Activated CD8-positive, alpha-beta T cell treated with anti-CD3 and anti-CD28 coated beads for 36 hours (primary cell): ENCODE measurements at regions of chr15 and their contacts with region 1.

Region 1: DNA sequence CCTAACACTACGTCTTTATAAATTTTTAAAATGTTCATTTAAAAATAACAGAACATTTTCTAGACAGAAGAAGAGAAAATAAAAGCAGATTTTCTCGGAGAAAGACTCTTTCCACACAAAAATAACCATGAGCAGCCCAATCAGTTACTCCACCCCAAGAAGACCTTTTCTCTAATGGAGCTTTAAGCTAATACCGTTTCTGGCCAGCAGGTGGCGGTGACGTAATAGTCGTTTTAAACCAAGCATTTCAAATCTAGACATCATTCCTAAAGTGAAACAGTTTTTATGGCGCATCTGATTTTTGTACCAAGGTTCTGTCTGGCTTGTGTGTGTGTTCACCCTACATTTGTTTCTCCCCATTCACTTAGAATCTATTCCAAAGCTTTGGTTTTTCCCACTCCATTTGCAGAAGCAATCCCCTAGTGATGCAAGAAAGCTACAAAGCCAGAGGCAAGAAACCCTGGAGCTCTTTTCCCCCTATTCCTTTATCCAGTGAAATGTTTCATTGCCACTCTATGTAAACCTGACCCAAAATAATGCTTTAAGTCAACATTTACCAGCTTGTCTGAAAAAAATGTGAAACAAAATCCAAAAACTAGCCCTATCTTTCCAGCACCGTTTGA is 336.7 kb upstream of the IGF1R start:
- DNase-seq: peak; percentile 90
- ATAC-seq: peak; percentile 55
- H3K4me3 Mint-ChIP-seq: no peak overlapping the region
- H3K27ac Mint-ChIP-seq: no peak overlapping the region
- H3K4me1 Mint-ChIP-seq: no peaks in the 10 kb centered on the region
- H3K27me3 Mint-ChIP-seq: peaks cover 13% of the 10 kb centered on the region
- CTCF ChIP-seq: peak; percentile 69

Region 2: GRCh38 chr15:98202256-98202655 is 109.4 kb before region 1 on chr15:
- CTCF ChIA-PET with region 1: no interaction called
- POLR2A ChIA-PET with region 1: no interaction called
- intact Hi-C with region 1: no loop called
- DNase-seq: no peak
- ATAC-seq: no peak
- H3K4me3 Mint-ChIP-seq: no peak overlapping the region
- H3K27ac Mint-ChIP-seq: no peak overlapping the region
- H3K4me1 Mint-ChIP-seq: no peaks in the 10 kb centered on the region
- H3K27me3 Mint-ChIP-seq: no peaks in the 10 kb centered on the region
- CTCF ChIP-seq: no peak

Region 3: GRCh38 chr15:98326810-98327209 is 15.1 kb after region 1 on chr15:
- CTCF ChIA-PET with region 1: interaction called, 11 read pairs
- POLR2A ChIA-PET with region 1: interaction called, 3 read pairs
- intact Hi-C with region 1: no loop called
- DNase-seq: no peak
- ATAC-seq: no peak
- H3K4me3 Mint-ChIP-seq: no peak overlapping the region
- H3K27ac Mint-ChIP-seq: no peak overlapping the region
- H3K4me1 Mint-ChIP-seq: no peaks in the 10 kb centered on the region
- H3K27me3 Mint-ChIP-seq: peaks cover 5% of the 10 kb centered on the region
- CTCF ChIP-seq: no peak

Region 4: DNA sequence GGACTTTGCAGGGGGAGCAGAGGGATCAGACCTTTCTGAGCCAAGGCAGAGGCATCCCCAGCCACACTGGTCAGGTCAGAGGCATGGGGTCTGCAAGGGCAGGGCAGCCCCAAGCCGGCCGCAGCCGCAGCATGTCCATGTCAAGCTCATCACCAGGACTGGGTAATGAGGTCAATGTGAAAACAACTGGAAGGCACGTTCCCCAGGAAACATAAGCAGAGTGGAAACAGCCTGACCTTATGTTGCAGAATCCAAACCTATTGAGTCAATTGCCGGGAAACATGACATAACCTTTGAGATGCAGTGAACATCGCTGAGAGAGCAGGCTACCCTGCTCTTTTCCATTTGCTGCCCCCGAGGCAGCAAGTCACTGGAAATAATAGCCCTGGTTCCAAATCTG is 21.6 kb after region 1 on chr15:
- CTCF ChIA-PET with region 1: interaction called, 11 read pairs
- POLR2A ChIA-PET with region 1: no interaction called
- intact Hi-C with region 1: no loop called
- DNase-seq: no peak
- ATAC-seq: no peak
- H3K4me3 Mint-ChIP-seq: no peak overlapping the region
- H3K27ac Mint-ChIP-seq: no peak overlapping the region
- H3K4me1 Mint-ChIP-seq: no peaks in the 10 kb centered on the region
- H3K27me3 Mint-ChIP-seq: no peaks in the 10 kb centered on the region
- CTCF ChIP-seq: no peak

Region 5: GRCh38 chr15:98421419-98422129 is 109.9 kb after region 1 on chr15:
- CTCF ChIA-PET with region 1: interaction called, 49 read pairs
- POLR2A ChIA-PET with region 1: no interaction called
- intact Hi-C with region 1: loop called (anchors 2 kb)
- DNase-seq: peak; percentile 68
- ATAC-seq: peak; percentile 79
- H3K4me3 Mint-ChIP-seq: no peak overlapping the region
- H3K27ac Mint-ChIP-seq: no peak overlapping the region
- H3K4me1 Mint-ChIP-seq: peaks cover 3% of the 10 kb centered on the region
- H3K27me3 Mint-ChIP-seq: peaks cover 26% of the 10 kb centered on the region
- CTCF ChIP-seq: peak; percentile 100

Region 6: DNA sequence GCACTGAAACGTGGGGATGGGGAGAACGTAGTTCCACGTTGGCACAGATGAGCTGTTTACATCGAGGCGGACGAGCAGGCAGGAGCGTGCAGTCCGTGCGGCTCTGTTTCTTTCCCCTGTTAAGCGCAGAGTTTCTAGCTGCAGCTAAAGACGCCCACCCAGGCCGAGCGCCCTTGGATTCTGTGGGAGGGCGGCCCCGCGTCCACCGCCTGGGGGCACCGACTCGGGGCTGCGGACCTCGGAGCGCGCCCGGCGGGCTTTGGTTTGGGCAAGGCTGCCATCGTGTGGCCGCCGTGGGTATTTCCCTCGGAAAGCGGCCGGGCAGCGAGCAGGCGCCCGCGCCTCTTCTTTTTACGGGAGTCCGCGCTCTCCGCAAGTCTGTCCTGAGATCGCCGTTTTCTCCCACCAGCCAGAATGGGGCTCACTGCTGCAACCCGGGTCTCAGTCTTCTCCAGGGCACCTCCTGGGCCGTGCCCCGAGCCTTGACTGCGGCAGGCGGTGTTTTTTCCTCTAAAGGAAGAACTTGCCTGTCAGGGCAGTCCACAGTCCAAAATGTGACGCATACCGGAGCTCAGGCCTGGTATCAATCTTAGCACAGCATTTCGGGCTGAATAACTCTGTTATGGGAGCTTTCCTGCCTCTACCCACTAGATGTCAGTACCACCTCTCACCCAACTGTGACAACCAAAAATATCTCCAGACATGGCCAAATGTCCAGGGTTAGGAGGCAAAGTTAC is 116.7 kb after region 1 on chr15:
- CTCF ChIA-PET with region 1: interaction called, 49 read pairs
- POLR2A ChIA-PET with region 1: interaction called, 4 read pairs
- intact Hi-C with region 1: no loop called
- DNase-seq: peak; percentile 67
- ATAC-seq: peak; percentile 88
- H3K4me3 Mint-ChIP-seq: peak overlapping the region; percentile 43
- H3K27ac Mint-ChIP-seq: no peak overlapping the region
- H3K4me1 Mint-ChIP-seq: peaks cover 3% of the 10 kb centered on the region
- H3K27me3 Mint-ChIP-seq: peaks cover 35% of the 10 kb centered on the region
- CTCF ChIP-seq: peak; percentile 80